Vagina (tissue), 2 donors: ENCODE measurements at regions of chr2 and their contacts with region 1.

Region 1: DNA sequence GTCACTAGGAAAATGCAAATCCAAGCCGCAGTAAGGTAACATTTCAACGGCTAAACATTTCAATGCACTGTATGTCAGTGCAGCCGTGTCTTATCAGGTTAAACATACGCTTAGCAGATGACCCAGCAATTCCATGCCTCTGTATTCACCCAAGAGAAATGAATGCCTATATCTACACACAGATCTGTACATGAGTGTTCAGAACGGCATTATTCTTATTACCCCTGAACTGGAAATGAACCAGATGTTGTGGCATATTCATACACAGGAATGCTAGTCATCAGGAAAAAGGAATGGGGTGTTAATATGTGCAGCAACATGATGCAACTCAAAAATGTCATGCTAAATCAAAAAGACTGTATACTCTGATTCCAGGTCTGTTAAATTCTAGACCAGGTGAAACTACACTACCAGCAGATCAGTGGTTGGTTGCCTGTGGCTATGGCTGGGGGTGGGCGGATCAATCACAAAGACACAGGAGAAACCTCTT is 80.4 kb upstream of the RPL31 start:
- DNase-seq: no peak
- H3K4me3 ChIP-seq: no peak overlapping the region
- H3K27ac ChIP-seq: no peak overlapping the region
- H3K4me1 ChIP-seq: no peaks in the 10 kb centered on the region
- H3K27me3 ChIP-seq: no peaks in the 10 kb centered on the region
- CTCF ChIP-seq: no peak
- POLR2A ChIP-seq: no peak

Region 2: GRCh38 chr2:100818606-100819369 is 102.9 kb before region 1 on chr2:
- intact Hi-C with region 1: loop called (anchors 1 kb)
- DNase-seq: no peak
- H3K4me3 ChIP-seq: peak overlapping the region; percentile 59 to 84
- H3K27ac ChIP-seq: peak overlapping the region; percentile 88
- H3K4me1 ChIP-seq: peaks cover 35% of the 10 kb centered on the region
- H3K27me3 ChIP-seq: no peaks in the 10 kb centered on the region
- CTCF ChIP-seq: no peak
- POLR2A ChIP-seq: no peak